ENCODE measurements at regions of chr1 and their contacts with region 1.

Region 1: DNA sequence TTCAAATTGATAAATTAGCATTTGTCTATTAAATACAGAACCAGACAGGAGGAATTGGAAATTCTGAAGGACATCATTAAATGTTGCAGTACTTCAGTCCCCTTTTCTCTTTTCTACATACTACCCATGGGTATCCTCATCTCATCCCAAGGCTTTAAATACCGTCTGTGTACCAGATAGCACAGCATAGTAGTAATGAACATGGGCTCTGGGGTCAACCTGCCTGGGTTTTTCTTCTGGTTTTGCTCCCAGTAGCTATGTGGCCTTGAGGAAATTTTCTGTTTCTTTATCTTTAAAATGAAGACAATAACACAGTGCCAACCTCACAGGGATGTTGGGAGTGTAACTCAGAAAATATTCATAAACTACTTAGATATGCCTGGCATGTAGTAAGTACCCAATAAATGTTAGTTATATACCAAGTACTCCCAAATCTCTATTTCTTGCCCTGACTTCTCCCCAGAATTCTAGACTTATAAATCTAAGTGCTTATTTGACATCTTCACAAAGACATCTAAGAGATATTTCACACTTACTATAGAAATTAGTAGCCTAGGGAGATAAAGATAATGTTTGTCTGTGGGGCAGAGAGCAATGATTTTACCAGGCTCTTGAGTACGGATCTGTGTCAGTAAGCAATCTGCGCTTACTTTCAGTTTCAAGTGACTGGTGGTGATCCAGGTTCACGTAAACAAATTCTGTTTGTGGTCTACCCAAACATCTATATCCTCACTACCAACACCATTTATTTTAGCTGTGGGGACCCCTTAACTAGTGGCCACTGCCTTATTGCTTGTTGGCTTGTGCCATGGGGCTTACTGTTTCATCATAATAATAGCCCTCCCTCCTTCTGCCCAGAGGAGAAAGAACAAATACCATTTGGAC is 37.3 kb downstream of the VANGL2 start:
- DNase-seq: peak; percentile 22
- H3K4me3 Mint-ChIP-seq: peak overlapping the region; percentile 43
- H3K27ac Mint-ChIP-seq: peak overlapping the region; percentile 73
- H3K4me1 Mint-ChIP-seq: peaks cover 28% of the 10 kb centered on the region
- H3K27me3 Mint-ChIP-seq: no peaks in the 10 kb centered on the region

Region 2: GRCh38 chr1:160454371-160455152 is 16.9 kb after region 1 on chr1:
- intact Hi-C with region 1: loop called (anchors 2 kb)
- DNase-seq: no peak
- H3K4me3 Mint-ChIP-seq: no peak overlapping the region
- H3K27ac Mint-ChIP-seq: peak overlapping the region; percentile 79
- H3K4me1 Mint-ChIP-seq: peaks cover 61% of the 10 kb centered on the region
- H3K27me3 Mint-ChIP-seq: no peaks in the 10 kb centered on the region